ENCODE measurements at regions of chr15 and their contacts with region 1.

Region 1: DNA sequence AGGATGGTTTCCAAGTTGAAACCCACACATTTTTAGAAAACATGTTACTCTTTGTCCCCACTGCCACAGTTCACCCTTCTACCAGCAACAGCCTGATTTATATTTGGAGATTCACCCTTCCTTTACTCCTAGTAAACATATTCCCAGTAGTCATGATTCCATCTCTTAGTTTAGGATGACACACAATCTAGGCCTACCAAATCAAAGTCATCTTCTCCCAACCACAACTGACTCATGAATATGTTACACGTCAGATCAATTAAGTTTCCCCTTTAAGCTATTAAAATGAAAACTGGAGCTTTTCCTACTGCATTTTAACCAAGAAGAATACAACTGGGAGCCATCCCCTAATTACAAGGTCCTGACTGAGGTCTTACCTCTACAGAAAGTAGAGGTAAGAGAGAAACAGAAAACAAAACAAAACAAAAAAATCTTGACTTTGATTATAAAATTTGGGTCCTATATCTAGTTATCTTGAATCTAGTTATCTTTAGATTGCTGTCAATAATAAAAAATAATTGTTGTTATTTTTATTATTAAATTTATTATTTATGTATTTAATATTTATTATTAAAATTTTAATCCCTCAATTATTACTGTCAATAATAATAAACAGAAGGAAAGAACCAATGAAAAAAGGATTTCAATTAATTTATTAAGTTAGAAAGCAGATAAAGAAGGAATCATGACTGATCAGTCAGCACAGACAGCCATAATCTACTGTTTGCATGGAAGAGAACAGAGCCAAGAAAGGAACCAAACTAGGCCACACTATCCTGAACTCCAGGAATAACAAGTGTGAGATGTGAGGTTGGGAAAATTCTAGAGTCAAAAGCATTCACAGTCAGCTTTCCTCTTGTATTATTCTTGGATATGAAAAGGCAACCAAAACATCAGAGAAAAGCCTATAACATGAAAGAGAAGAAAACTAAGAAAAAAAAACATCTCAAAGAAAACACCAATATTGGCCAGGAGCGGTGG is 12.5 kb downstream of the DPH6 start:
- DNase-seq: no peak
- H3K4me3 ChIP-seq: no peak overlapping the region
- H3K27ac ChIP-seq: no peak overlapping the region
- H3K4me1 ChIP-seq: peaks cover 0 to 12% (median 5%) of the 10 kb centered on the region in 4 donors
- H3K27me3 ChIP-seq: no peaks in the 10 kb centered on the region
- CTCF ChIP-seq: no peak
- EP300 ChIP-seq: no peak
- POLR2A ChIP-seq: no peak

Region 2: GRCh38 chr15:35764661-35765519 is 231.5 kb after region 1 on chr15:
- intact Hi-C with region 1: loop called (anchors 5 kb)
- DNase-seq: no peak
- H3K4me3 ChIP-seq: no peak overlapping the region
- H3K27ac ChIP-seq: no peak overlapping the region
- H3K4me1 ChIP-seq: peaks cover 4 to 12% (median 10%) of the 10 kb centered on the region in 4 donors
- H3K27me3 ChIP-seq: no peaks in the 10 kb centered on the region
- CTCF ChIP-seq: no peak
- EP300 ChIP-seq: no peak
- POLR2A ChIP-seq: no peak

Measured in esophagus muscularis mucosa (tissue), 4 donors.